B cell (primary cell): ENCODE measurements at regions of chr10 and their contacts with region 1.

Region 1: DNA sequence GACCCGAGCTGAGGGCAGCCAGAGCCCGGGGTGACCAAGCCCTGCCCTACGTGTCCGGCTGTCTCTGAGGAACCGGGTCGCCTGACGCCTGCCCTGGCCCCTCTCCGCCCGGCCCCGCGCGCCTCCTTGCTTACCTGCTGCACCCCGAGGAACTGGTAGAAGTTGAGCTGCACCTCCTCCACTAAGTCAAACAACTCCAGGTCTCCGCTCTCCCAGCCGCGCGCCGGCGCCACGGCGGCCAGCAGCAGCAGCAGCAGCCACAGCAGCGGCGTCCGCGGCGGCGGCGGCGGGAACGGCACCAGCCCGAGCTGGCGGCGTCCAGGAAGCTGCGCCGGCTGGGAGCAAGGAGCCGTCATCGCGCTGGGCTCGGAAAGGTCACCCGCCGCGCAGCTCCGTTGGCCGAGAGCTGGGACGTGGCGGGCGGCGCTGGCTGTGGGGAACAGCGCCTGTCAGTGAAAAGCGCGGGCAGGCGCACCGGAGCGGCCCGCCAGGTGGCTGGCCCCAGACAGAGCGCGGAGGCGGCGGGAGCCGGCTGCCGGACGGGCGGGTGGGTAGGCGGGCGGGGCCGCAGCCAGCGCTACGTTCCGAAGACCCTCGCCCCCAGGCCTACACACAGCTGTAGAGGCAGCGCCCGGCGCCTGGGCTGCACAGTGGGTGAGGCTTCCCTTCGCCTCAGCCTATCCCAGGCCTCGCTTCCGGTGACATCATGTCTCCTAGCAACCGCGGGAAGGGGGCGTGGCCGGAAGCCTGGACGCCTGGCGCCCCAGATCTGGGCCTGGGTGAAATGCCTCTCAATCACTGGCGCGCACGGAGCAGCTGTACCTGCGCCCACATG is at the start of gene DNAJC1:
- DNase-seq: peak; percentile 97
- ATAC-seq: peak; percentile 93
- H3K4me3 ChIP-seq: peak within 1 kb of the TSS; percentile 57 to 90 (median 79)
- H3K4me3 Mint-ChIP-seq: peak within 1 kb of the TSS; percentile 90
- H3K27ac ChIP-seq: peak within 1 kb of the TSS; percentile 84
- H3K27ac Mint-ChIP-seq: peak within 1 kb of the TSS; percentile 91
- H3K4me1 ChIP-seq: peaks cover 30 to 31% of the 10 kb centered on the region in 2 donors
- H3K4me1 Mint-ChIP-seq: peaks cover 40% of the 10 kb centered on the region
- H3K27me3 ChIP-seq: no peaks in the 10 kb centered on the region
- H3K27me3 Mint-ChIP-seq: no peaks in the 10 kb centered on the region
- CTCF ChIP-seq: peak; percentile 31
- total RNA-seq, gene DNAJC1: 15.4 and 16.1 TPM in 2 replicates

Region 2: DNA sequence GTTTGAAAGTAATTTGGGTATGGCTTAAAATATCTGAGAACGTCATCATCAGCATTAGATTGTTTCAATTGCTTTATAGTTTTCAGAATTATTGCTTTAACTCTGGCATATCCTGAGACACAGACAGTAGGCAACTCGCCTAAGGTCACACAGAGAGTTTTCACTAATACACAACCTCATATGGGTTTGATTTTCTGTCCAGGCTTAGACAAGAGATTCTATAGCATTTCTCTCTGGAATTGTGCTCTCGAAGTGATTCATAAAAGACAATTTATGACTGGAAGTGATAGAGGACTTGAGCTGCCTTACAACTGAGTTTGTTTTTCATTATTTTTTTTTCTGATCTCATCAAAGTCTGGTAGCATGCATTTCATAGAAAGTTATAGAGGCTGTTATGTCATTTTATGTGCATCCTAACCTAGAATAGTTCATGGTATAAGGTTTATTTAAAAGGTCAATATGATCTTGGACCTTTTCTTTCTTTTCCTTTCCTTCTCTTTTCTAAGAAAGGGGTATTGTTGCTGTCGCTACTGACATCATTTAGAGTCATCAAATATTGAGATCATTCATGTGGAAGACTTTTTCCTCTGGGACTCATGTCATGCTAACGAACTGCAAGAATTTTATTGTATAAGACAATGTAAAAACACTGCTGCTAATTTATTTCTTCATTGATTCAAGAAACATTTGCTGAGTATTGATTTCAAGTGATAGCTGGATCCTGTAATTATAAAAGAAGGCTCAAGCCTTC is 1908.9 kb before region 1 on chr10:
- CTCF ChIA-PET with region 1: no interaction called
- POLR2A ChIA-PET with region 1: no interaction called
- intact Hi-C with region 1: no loop called
- DNase-seq: no peak
- ATAC-seq: no peak
- H3K4me3 ChIP-seq: no peak overlapping the region
- H3K4me3 Mint-ChIP-seq: no peak overlapping the region
- H3K27ac ChIP-seq: no peak overlapping the region
- H3K27ac Mint-ChIP-seq: no peak overlapping the region
- H3K4me1 ChIP-seq: no peaks in the 10 kb centered on the region
- H3K4me1 Mint-ChIP-seq: no peaks in the 10 kb centered on the region
- H3K27me3 ChIP-seq: no peaks in the 10 kb centered on the region
- H3K27me3 Mint-ChIP-seq: no peaks in the 10 kb centered on the region
- CTCF ChIP-seq: no peak

Region 3: GRCh38 chr10:21533467-21534279 is 469.6 kb before region 1 on chr10 and contains the start of gene MLLT10:
- CTCF ChIA-PET with region 1: no interaction called
- POLR2A ChIA-PET with region 1: interaction called, 3 read pairs
- intact Hi-C with region 1: loop called (anchors 1 kb)
- DNase-seq: peak; percentile 96
- ATAC-seq: peak; percentile 87
- H3K4me3 ChIP-seq: peak within 1 kb of the TSS; percentile 58 to 98 (median 84)
- H3K4me3 Mint-ChIP-seq: peak within 1 kb of the TSS; percentile 94
- H3K27ac ChIP-seq: peak within 1 kb of the TSS; percentile 69 to 82
- H3K27ac Mint-ChIP-seq: peak within 1 kb of the TSS; percentile 95
- H3K4me1 ChIP-seq: peaks cover 12 to 16% of the 10 kb centered on the region in 2 donors
- H3K4me1 Mint-ChIP-seq: peaks cover 17% of the 10 kb centered on the region
- H3K27me3 ChIP-seq: peaks cover 0 to 10% (median under 1%) of the 10 kb centered on the region in 4 experiments
- H3K27me3 Mint-ChIP-seq: peaks cover 7% of the 10 kb centered on the region
- CTCF ChIP-seq: no peak
- total RNA-seq, gene MLLT10: 66.5 and 70.5 TPM in 2 replicates

Region 4: DNA sequence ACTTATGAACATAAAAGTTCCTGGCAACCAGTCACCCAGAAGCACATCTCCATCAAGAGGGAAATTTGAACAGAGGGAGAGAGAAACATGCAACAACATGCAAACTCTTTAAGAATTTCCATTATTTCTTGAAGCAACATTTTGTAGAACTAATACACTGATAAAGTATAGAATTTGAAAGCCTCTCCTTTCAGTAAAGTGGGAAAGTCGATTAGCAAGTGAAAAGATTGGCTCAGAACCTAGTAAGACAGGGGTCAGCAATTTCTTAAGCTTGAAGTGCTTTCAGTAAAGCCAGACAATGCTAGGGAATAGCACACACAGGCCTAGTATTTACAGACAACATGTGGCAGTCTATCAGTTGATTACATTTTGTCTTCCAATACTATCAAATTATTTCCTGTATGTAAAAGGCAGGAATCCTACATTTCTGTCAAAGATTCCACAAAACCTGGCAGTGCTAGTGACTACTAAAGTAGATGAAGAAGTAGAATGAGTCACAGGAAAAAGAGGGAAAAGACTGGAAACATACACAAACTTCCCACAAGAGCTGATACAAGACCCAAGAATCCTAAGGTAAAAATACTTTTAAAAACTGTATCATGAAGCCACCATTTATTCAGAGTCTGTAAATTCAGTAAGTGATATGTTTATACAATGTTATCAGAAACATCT is 25.0 kb before region 1 on chr10:
- CTCF ChIA-PET with region 1: no interaction called
- POLR2A ChIA-PET with region 1: no interaction called
- intact Hi-C with region 1: no loop called
- DNase-seq: no peak
- ATAC-seq: no peak
- H3K4me3 ChIP-seq: no peak overlapping the region
- H3K4me3 Mint-ChIP-seq: no peak overlapping the region
- H3K27ac ChIP-seq: no peak overlapping the region
- H3K27ac Mint-ChIP-seq: no peak overlapping the region
- H3K4me1 ChIP-seq: no peaks in the 10 kb centered on the region
- H3K4me1 Mint-ChIP-seq: peaks cover 2% of the 10 kb centered on the region
- H3K27me3 ChIP-seq: no peaks in the 10 kb centered on the region
- H3K27me3 Mint-ChIP-seq: no peaks in the 10 kb centered on the region
- CTCF ChIP-seq: no peak

Region 5: GRCh38 chr10:22054961-22055360 is 51.7 kb after region 1 on chr10:
- CTCF ChIA-PET with region 1: no interaction called
- POLR2A ChIA-PET with region 1: no interaction called
- intact Hi-C with region 1: no loop called
- DNase-seq: no peak
- ATAC-seq: no peak
- H3K4me3 ChIP-seq: no peak overlapping the region
- H3K4me3 Mint-ChIP-seq: no peak overlapping the region
- H3K27ac ChIP-seq: no peak overlapping the region
- H3K27ac Mint-ChIP-seq: no peak overlapping the region
- H3K4me1 ChIP-seq: no peaks in the 10 kb centered on the region
- H3K4me1 Mint-ChIP-seq: no peaks in the 10 kb centered on the region
- H3K27me3 ChIP-seq: no peaks in the 10 kb centered on the region
- H3K27me3 Mint-ChIP-seq: peaks cover 8% of the 10 kb centered on the region
- CTCF ChIP-seq: no peak

Region 6: DNA sequence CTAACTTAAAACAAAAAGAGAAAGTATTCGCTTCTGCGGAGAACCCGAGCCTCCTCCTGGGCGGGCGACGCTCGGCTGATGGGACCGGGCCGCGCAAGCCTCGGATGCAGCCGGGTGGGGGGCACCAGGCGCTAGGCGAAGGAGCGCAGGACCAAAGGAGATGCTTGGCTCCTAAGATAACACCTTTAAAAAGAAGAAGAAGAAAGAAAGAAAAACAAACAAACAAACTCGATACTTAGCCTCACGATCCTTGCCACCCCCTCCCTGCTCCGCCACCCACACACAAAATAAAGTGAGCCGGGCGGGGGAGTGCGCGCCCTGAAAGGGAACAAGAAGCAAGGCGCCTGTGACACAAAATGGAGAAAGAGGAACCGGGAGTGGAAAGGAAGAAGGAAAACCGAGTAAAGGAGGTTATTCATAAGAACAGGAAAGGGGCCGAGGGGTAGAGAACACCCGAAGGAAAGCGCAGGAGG is 248.5 kb after region 1 on chr10:
- CTCF ChIA-PET with region 1: interaction called, 3 read pairs
- POLR2A ChIA-PET with region 1: interaction called, 10 read pairs
- intact Hi-C with region 1: loop called (anchors 1 kb)
- DNase-seq: peak; percentile 90
- ATAC-seq: peak; percentile 56
- H3K4me3 ChIP-seq: peak overlapping the region; percentile 77 to 95 (median 86)
- H3K4me3 Mint-ChIP-seq: peak overlapping the region; percentile 97
- H3K27ac ChIP-seq: peak overlapping the region; percentile 95 to 97
- H3K27ac Mint-ChIP-seq: peak overlapping the region; percentile 100
- H3K4me1 ChIP-seq: peaks cover 9 to 15% of the 10 kb centered on the region in 2 donors
- H3K4me1 Mint-ChIP-seq: peaks cover 26% of the 10 kb centered on the region
- H3K27me3 ChIP-seq: no peaks in the 10 kb centered on the region
- H3K27me3 Mint-ChIP-seq: no peaks in the 10 kb centered on the region
- CTCF ChIP-seq: no peak

Region 7: DNA sequence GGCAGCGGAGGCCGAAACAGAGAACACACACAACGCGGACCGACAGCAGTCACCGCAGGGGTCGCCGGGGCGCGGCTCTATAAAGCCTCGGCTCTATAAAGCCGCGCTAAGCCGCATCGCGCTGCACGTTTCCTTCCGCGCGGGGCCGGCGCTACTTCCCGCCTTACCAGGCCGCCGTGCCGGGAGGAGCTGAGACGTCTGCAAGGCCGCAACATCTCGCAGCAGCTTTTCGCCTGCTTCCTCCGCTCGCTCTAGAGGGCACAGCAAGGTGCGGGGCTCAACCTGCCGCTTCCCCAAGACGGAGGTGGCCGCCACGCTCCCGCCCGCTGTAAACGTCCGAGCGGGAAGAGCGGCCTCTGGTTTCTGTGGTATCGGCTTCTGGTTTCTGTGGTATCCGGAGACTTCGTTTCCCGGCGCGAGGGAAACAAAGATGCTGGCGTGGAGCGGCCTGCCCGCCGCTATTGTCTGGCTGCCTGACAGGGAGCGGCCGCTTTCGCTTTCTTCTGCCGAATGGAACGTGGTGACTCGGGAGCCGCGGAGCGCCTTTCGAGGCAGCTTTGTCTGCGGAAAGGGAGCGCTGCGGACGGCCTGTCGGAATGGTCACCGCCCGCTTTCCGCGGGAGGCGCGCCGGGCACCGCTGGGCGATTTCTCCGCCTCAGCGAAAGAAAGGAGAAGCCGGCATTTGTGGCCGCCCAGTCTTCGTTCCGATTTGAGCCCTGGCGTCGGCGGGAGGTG is 433.8 kb after region 1 on chr10:
- CTCF ChIA-PET with region 1: no interaction called
- POLR2A ChIA-PET with region 1: interaction called, 19 read pairs
- intact Hi-C with region 1: loop called (anchors 1 kb)
- DNase-seq: peak; percentile 96
- ATAC-seq: peak; percentile 86
- H3K4me3 ChIP-seq: peak overlapping the region; percentile 65 to 93 (median 86)
- H3K4me3 Mint-ChIP-seq: peak overlapping the region; percentile 98
- H3K27ac ChIP-seq: peak overlapping the region; percentile 96 to 97
- H3K27ac Mint-ChIP-seq: peak overlapping the region; percentile 99
- H3K4me1 ChIP-seq: peaks cover 19 to 24% of the 10 kb centered on the region in 2 donors
- H3K4me1 Mint-ChIP-seq: peaks cover 36% of the 10 kb centered on the region
- H3K27me3 ChIP-seq: no peaks in the 10 kb centered on the region
- H3K27me3 Mint-ChIP-seq: no peaks in the 10 kb centered on the region
- CTCF ChIP-seq: peak; percentile 25

Region 8: GRCh38 chr10:22988581-22989360 is 985.5 kb after region 1 on chr10:
- CTCF ChIA-PET with region 1: interaction called, 103 read pairs
- POLR2A ChIA-PET with region 1: no interaction called
- intact Hi-C with region 1: no loop called
- DNase-seq: peak; percentile 82
- ATAC-seq: peak; percentile 83
- H3K4me3 ChIP-seq: no peak overlapping the region
- H3K4me3 Mint-ChIP-seq: no peak overlapping the region
- H3K27ac ChIP-seq: no peak overlapping the region
- H3K27ac Mint-ChIP-seq: peak overlapping the region; percentile 22
- H3K4me1 ChIP-seq: no peaks in the 10 kb centered on the region
- H3K4me1 Mint-ChIP-seq: peaks cover 6% of the 10 kb centered on the region
- H3K27me3 ChIP-seq: peaks cover 0 to 3% (median 0%) of the 10 kb centered on the region in 4 experiments
- H3K27me3 Mint-ChIP-seq: peaks cover 16% of the 10 kb centered on the region
- CTCF ChIP-seq: peak; percentile 97